CD4-positive, alpha-beta memory T cell (primary cell): ENCODE measurements at regions of chrX and their contacts with region 1.

Region 1: DNA sequence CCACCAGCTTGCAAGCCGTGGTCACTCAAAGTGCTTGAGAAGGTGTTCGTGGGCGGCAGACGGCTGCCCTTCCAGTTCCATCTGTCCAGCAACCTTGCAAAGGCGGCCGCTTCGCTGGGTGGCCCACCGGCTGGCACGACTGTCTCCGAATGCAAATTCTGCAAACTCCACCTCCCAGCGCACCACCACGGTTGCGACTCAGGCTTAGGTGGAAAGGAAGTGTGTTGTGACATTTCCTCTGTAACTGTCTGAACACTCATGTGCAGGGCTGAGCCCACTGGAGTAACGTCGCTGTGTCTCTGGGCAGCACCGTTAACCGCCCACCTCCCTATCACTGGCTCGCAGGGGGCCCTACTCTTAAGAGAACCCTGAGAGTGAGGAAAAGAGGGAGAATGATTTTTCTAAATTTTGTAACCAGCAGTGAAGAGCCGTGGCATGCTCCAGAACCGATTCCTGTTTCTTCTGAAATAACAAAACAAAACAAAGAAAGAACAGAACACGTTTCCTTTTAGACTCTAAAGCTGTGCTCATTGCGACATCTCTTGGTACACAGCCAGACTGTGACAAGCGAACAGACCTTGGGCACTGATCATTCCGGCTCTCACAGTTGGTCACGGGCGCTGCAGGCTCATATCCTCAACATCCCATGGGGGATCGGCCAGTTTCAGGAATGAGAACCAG is at the start of gene P2RY8:
- DNase-seq: peak; percentile 78 to 86 (median 81)
- H3K4me3 ChIP-seq: peak within 1 kb of the TSS; percentile 94
- H3K4me3 Mint-ChIP-seq: peak within 1 kb of the TSS; percentile 93 to 99 (median 98)
- H3K27ac ChIP-seq: peak within 1 kb of the TSS; percentile 78
- H3K27ac Mint-ChIP-seq: peak within 1 kb of the TSS; percentile 95 to 100 (median 98)
- H3K4me1 ChIP-seq: peaks cover 24% of the 10 kb centered on the region
- H3K4me1 Mint-ChIP-seq: peaks cover 12 to 34% (median 15%) of the 10 kb centered on the region in 4 donors
- H3K27me3 ChIP-seq: no peaks in the 10 kb centered on the region
- H3K27me3 Mint-ChIP-seq: no peaks in the 10 kb centered on the region
- total RNA-seq, gene P2RY8: 195 TPM

Region 2: GRCh38 chrX:1246816-1247215 is 290.4 kb before region 1 on chrX:
- CTCF ChIA-PET with region 1: no interaction called
- POLR2A ChIA-PET with region 1: no interaction called
- intact Hi-C with region 1: loop called (anchors 2 kb)
- DNase-seq: peak; percentile 67 to 78 (median 72)
- H3K4me3 ChIP-seq: no peak overlapping the region
- H3K4me3 Mint-ChIP-seq: peak overlapping the region in 3 of 8 donors; percentile 30 to 80 (median 44)
- H3K27ac ChIP-seq: no peak overlapping the region
- H3K27ac Mint-ChIP-seq: peak overlapping the region in 6 of 7 donors; percentile 37 to 90 (median 75)
- H3K4me1 ChIP-seq: peaks cover 26% of the 10 kb centered on the region
- H3K4me1 Mint-ChIP-seq: peaks cover 16 to 32% (median 23%) of the 10 kb centered on the region in 4 donors
- H3K27me3 ChIP-seq: no peaks in the 10 kb centered on the region
- H3K27me3 Mint-ChIP-seq: no peaks in the 10 kb centered on the region

Region 3: GRCh38 chrX:1462596-1463251 is 74.5 kb before region 1 on chrX:
- CTCF ChIA-PET with region 1: no interaction called
- POLR2A ChIA-PET with region 1: no interaction called
- intact Hi-C with region 1: loop called (anchors 1 kb)
- DNase-seq: peak; percentile 87 to 95 (median 93)
- H3K4me3 ChIP-seq: no peak overlapping the region
- H3K4me3 Mint-ChIP-seq: peak overlapping the region; percentile 30 to 82 (median 60)
- H3K27ac ChIP-seq: peak overlapping the region; percentile 76
- H3K27ac Mint-ChIP-seq: peak overlapping the region; percentile 95 to 99 (median 98)
- H3K4me1 ChIP-seq: peaks cover 62% of the 10 kb centered on the region
- H3K4me1 Mint-ChIP-seq: peaks cover 37 to 61% (median 51%) of the 10 kb centered on the region in 4 donors
- H3K27me3 ChIP-seq: no peaks in the 10 kb centered on the region
- H3K27me3 Mint-ChIP-seq: no peaks in the 10 kb centered on the region

Region 4: DNA sequence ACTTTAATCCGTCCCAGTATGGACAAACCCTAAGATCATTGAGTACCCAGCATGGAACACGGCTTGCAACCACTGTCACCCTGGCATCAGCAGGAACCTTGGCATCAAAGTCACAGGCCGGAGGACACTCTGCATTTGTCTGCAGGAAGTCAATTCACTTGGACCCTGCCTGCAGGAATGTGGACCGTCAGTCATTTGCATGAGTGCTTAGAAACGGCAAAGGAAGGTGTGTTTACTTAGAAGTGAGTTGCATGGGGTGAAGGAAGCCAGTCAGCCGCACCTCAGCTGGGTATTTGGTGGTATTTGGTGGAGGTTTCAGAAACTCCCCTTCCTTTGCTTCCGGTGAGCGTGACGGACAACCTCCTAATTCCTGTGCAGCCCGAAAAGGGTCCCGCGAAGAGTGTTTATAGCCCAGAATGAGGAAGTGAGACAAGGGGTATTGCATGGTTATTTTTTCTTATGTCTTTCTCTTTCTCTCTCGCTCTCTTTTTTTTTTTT is 15.7 kb before region 1 on chrX:
- CTCF ChIA-PET with region 1: no interaction called
- POLR2A ChIA-PET with region 1: no interaction called
- intact Hi-C with region 1: loop called (anchors 2 kb)
- DNase-seq: peak; percentile 71 to 90 (median 79)
- H3K4me3 ChIP-seq: peak overlapping the region in 1 of 2 donors; percentile 8
- H3K4me3 Mint-ChIP-seq: peak overlapping the region; percentile 83 to 90 (median 85)
- H3K27ac ChIP-seq: peak overlapping the region; percentile 53
- H3K27ac Mint-ChIP-seq: peak overlapping the region; percentile 94 to 98 (median 96)
- H3K4me1 ChIP-seq: peaks cover 80% of the 10 kb centered on the region
- H3K4me1 Mint-ChIP-seq: peaks cover 48 to 61% (median 55%) of the 10 kb centered on the region in 4 donors
- H3K27me3 ChIP-seq: no peaks in the 10 kb centered on the region
- H3K27me3 Mint-ChIP-seq: no peaks in the 10 kb centered on the region

Region 5: DNA sequence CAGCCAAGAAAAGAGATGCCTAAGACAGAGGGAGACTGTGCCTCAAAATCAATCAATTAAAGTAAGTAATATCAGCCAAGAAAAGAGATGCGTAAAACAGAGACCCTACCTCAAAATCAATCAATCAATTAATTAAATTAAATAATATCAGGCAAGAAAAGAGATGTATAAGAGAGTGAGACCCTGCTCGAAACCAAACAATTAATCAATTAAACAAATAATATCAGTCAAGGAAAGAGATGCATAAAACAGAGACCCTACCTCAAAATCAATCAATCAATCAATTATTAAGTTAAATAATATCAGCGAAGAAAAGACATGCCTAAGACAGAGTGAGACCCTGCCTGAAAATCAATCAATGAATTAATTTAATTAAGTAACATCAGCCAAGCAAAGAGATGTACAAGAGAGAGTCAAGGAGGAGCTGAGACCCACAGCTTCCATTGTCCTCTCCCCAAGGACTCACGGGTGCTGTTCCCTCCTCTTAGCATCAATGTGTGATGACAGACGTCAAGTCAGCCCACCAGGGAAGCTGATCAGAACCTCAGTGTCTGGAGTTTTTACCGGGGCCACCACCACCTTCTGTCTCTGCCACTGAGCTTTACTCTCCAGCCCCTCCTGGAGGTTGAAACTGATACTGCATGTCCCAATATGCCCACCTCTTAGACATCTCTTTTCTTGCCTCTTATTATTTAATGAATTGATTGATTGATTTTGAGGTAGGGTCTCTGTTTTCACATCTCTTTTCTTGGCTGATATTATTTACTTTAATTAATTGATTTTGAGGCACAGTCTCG is 43.8 kb after region 1 on chrX:
- CTCF ChIA-PET with region 1: no interaction called
- POLR2A ChIA-PET with region 1: no interaction called
- intact Hi-C with region 1: loop called (anchors 1 kb)
- DNase-seq: peak; percentile 70 to 78 (median 75)
- H3K4me3 ChIP-seq: no peak overlapping the region
- H3K4me3 Mint-ChIP-seq: peak overlapping the region in 6 of 8 donors; percentile 25 to 71 (median 58)
- H3K27ac ChIP-seq: no peak overlapping the region
- H3K27ac Mint-ChIP-seq: peak overlapping the region; percentile 17 to 87 (median 70)
- H3K4me1 ChIP-seq: peaks cover 60% of the 10 kb centered on the region
- H3K4me1 Mint-ChIP-seq: peaks cover 11 to 22% (median 16%) of the 10 kb centered on the region in 4 donors
- H3K27me3 ChIP-seq: no peaks in the 10 kb centered on the region
- H3K27me3 Mint-ChIP-seq: no peaks in the 10 kb centered on the region

Region 6: GRCh38 chrX:2627272-2627867 is 1090.2 kb after region 1 on chrX:
- CTCF ChIA-PET with region 1: no interaction called
- POLR2A ChIA-PET with region 1: no interaction called
- intact Hi-C with region 1: loop called (anchors 5 kb)
- DNase-seq: peak in 4 of 5 donors; percentile 32 to 43 (median 38)
- H3K4me3 ChIP-seq: no peak overlapping the region
- H3K4me3 Mint-ChIP-seq: peak overlapping the region in 1 of 8 donors; percentile 17
- H3K27ac ChIP-seq: no peak overlapping the region
- H3K27ac Mint-ChIP-seq: peak overlapping the region in 5 of 7 donors; percentile 48 to 92 (median 65)
- H3K4me1 ChIP-seq: peaks cover 19% of the 10 kb centered on the region
- H3K4me1 Mint-ChIP-seq: peaks cover 31 to 49% (median 38%) of the 10 kb centered on the region in 4 donors
- H3K27me3 ChIP-seq: no peaks in the 10 kb centered on the region
- H3K27me3 Mint-ChIP-seq: no peaks in the 10 kb centered on the region